CD8-positive, alpha-beta T cell (primary cell): ENCODE measurements at regions of chr11 and their contacts with region 1.

Region 1: GRCh38 chr11:114208377-114208776 is 87.8 kb upstream of the NNMT start:
- DNase-seq: peak in 8 of 9 experiments; percentile 19 to 68 (median 42)
- ATAC-seq: peak; percentile 94
- H3K4me3 ChIP-seq: no peak overlapping the region
- H3K4me3 Mint-ChIP-seq: no peak overlapping the region
- H3K27ac ChIP-seq: peak overlapping the region in 1 of 2 experiments; percentile 1
- H3K27ac Mint-ChIP-seq: peak overlapping the region; percentile 55
- H3K4me1 ChIP-seq: peaks cover 13% of the 10 kb centered on the region
- H3K4me1 Mint-ChIP-seq: peaks cover 30% of the 10 kb centered on the region
- H3K27me3 ChIP-seq: no peaks in the 10 kb centered on the region
- H3K27me3 Mint-ChIP-seq: no peaks in the 10 kb centered on the region
- CTCF ChIP-seq: no peak

Region 2: DNA sequence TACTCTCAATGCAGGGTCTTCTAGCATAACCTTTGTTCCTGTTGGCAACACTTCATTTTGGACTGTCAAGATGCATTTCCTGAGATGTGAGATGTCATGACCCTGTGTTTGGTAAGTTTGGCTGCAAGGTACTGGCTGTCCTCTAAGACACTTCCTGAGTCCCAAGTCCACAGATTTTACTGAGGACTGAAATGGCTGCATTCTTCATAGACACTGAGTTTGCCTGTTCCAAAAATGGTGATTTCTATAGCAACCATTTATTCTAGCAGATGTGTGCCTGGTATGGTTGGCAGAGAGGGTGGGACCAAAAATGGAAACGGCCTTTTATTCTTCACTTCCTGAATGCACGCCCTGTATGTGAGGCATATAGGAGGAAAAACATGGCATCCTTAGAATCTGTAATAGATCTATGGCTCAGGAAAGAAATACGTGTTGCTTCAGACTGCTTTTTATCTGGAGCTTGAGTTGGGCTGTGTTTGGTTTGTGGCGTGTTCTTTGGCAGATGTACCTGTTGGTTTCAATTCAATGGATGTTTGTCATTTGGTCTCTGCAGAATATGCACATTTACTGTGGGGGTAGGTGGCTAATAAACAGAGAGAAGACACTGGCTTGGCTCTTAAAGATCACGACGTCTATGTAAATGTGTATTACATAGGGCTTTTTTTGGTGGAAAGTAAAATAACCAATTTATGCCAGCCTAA is 86.4 kb before region 1 on chr11:
- CTCF ChIA-PET with region 1: no interaction called
- POLR2A ChIA-PET with region 1: no interaction called
- intact Hi-C with region 1: no loop called
- DNase-seq: no peak
- ATAC-seq: no peak
- H3K4me3 ChIP-seq: no peak overlapping the region
- H3K4me3 Mint-ChIP-seq: no peak overlapping the region
- H3K27ac ChIP-seq: no peak overlapping the region
- H3K27ac Mint-ChIP-seq: no peak overlapping the region
- H3K4me1 ChIP-seq: no peaks in the 10 kb centered on the region
- H3K4me1 Mint-ChIP-seq: peaks cover 26% of the 10 kb centered on the region
- H3K27me3 ChIP-seq: no peaks in the 10 kb centered on the region
- H3K27me3 Mint-ChIP-seq: peaks cover 3% of the 10 kb centered on the region
- CTCF ChIP-seq: no peak

Region 3: DNA sequence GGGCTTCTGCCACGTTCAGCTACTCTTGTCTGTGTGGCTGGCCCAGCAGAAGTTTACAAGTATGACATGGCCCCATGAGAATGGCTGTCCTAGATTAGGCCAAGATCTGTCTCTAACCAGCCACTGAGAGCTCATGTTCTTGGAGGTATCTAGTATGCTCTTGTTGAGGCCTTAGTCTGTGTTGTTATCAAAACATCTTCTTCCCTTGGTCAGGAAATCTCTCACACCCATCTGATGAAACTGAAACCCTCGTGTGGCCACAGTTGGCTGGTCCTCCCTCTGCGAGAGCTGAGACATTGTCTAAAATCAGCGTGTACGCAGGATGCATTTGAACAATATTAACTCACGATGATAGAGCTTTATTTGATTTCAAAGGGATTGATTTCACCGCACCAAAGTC is 21.2 kb before region 1 on chr11:
- CTCF ChIA-PET with region 1: no interaction called
- POLR2A ChIA-PET with region 1: interaction called, 3 read pairs
- intact Hi-C with region 1: loop called in 1 of 2 experiments (anchors 1 kb)
- DNase-seq: peak in 1 of 9 experiments; percentile 36
- ATAC-seq: no peak
- H3K4me3 ChIP-seq: no peak overlapping the region
- H3K4me3 Mint-ChIP-seq: no peak overlapping the region
- H3K27ac ChIP-seq: peak overlapping the region in 1 of 2 experiments; percentile 36
- H3K27ac Mint-ChIP-seq: peak overlapping the region; percentile 73
- H3K4me1 ChIP-seq: peaks cover 24% of the 10 kb centered on the region
- H3K4me1 Mint-ChIP-seq: peaks cover 63% of the 10 kb centered on the region
- H3K27me3 ChIP-seq: no peaks in the 10 kb centered on the region
- H3K27me3 Mint-ChIP-seq: no peaks in the 10 kb centered on the region
- CTCF ChIP-seq: no peak

Region 4: DNA sequence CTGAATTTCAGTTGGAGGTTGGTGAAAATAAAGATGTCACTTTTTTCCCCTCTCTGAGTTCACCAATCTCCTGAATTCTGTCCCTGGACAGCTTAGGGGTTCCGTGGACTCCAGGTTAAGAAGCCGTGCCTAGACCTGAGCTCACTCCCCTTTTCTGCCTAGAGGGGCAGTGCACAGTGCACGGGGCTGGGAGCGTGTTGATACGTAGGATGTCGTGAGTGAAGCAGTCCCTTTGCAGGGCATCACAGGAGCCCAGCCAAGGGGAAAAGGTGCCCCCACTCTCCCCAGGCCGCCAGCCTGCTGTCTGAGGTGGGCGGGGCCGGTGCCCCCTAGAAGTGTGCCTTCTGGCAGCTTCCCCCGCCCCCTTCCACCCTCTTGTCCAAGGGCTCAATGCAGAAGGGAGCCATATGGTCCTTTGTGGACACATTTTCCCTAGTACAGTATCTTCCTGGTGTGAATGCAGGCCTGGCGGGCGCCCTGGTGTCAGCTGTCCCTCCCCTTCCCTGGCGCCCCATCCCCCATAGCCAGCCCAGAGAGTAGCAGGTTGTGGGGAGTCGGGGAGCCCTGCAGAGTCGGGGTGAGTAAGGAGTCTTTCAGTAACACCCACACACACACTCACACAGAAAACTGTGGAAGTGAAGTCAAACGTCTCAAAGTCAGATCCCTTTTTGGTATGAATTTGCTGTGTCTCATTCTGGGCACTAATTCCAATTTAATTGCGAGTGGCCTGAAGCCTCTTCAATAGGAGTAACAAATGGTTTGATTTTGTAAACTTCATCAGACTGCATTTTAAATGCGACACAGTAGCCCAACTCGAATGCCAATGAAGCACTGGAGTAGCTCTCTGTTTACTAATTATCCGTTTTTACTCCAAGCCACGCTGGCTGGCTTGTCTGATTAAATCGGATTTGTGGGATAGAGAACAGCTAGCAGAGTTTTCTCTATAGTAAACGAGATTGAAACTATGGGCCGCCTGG is 20.3 kb after region 1 on chr11:
- CTCF ChIA-PET with region 1: no interaction called
- POLR2A ChIA-PET with region 1: no interaction called
- intact Hi-C with region 1: no loop called
- DNase-seq: no peak
- ATAC-seq: no peak
- H3K4me3 ChIP-seq: no peak overlapping the region
- H3K4me3 Mint-ChIP-seq: no peak overlapping the region
- H3K27ac ChIP-seq: no peak overlapping the region
- H3K27ac Mint-ChIP-seq: no peak overlapping the region
- H3K4me1 ChIP-seq: no peaks in the 10 kb centered on the region
- H3K4me1 Mint-ChIP-seq: peaks cover 20% of the 10 kb centered on the region
- H3K27me3 ChIP-seq: no peaks in the 10 kb centered on the region
- H3K27me3 Mint-ChIP-seq: no peaks in the 10 kb centered on the region
- CTCF ChIP-seq: no peak

Region 5: GRCh38 chr11:114295676-114296604 is 87.6 kb after region 1 on chr11 and contains the start of gene NNMT:
- CTCF ChIA-PET with region 1: no interaction called
- POLR2A ChIA-PET with region 1: no interaction called
- intact Hi-C with region 1: no loop called
- DNase-seq: no peak
- ATAC-seq: no peak
- H3K4me3 ChIP-seq: no peak within 1 kb of the TSS
- H3K4me3 Mint-ChIP-seq: no peak within 1 kb of the TSS
- H3K27ac ChIP-seq: no peak within 1 kb of the TSS
- H3K27ac Mint-ChIP-seq: no peak within 1 kb of the TSS
- H3K4me1 ChIP-seq: no peaks in the 10 kb centered on the region
- H3K4me1 Mint-ChIP-seq: no peaks in the 10 kb centered on the region
- H3K27me3 ChIP-seq: no peaks in the 10 kb centered on the region
- H3K27me3 Mint-ChIP-seq: peaks cover 11% of the 10 kb centered on the region
- CTCF ChIP-seq: no peak
- total RNA-seq, gene NNMT: not detected